ENCODE measurements at regions of chr11 and their contacts with region 1.

Region 1: DNA sequence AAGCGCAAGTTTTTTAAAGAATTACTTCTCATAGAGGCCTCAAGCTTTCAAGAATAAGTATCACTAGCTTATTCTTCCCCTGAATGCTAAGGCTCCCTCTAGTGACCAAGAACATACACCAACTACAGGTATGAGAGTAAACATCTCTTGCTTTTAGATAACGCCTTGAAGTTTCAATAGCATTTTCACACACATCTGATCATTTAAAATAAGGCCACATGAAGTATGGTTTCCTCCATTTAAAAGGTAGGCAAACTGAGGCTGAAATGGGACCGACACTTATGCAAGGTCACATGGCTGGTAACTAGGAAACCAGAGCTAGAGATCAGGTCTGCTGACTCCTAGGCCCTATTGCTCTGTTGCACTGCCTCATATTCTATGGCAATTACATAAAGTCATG is 66.5 kb downstream of the CCDC34 start:
- DNase-seq: no peak
- H3K4me3 ChIP-seq: no peak overlapping the region
- H3K27ac ChIP-seq: no peak overlapping the region
- H3K27me3 ChIP-seq: no peaks in the 10 kb centered on the region
- CTCF ChIP-seq: peak; percentile 87

Region 2: GRCh38 chr11:27183672-27184457 is 112.6 kb before region 1 on chr11:
- CTCF ChIA-PET with region 1: interaction called, 138 read pairs
- POLR2A ChIA-PET with region 1: no interaction called
- DNase-seq: peak; percentile 41
- H3K4me3 ChIP-seq: no peak overlapping the region
- H3K27ac ChIP-seq: no peak overlapping the region
- H3K27me3 ChIP-seq: peaks cover 20% of the 10 kb centered on the region
- CTCF ChIP-seq: peak; percentile 79

Region 3: DNA sequence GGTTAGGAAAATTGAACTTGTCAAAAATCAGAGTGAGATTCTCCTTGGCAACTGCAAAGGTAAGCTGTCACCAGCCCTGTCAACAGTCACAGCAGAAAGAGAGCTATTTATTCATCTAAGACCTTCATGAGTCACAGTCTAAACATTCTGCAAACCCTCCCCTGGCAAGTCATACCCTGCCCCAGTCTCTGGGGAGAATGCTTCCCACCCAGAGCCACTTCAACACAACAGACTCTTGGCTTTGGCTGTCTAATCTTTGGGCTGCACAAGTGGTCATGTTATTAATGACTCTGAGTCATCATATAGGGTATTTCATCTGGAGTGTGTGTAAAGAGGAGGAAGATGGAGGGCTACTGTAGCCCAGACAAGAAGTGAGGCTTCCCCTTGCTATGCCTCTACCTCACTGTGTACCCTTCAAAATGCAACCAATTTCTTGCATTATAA is 86.9 kb before region 1 on chr11:
- CTCF ChIA-PET with region 1: interaction called, 11 read pairs
- POLR2A ChIA-PET with region 1: no interaction called
- DNase-seq: no peak
- H3K4me3 ChIP-seq: no peak overlapping the region
- H3K27ac ChIP-seq: no peak overlapping the region
- H3K27me3 ChIP-seq: no peaks in the 10 kb centered on the region
- CTCF ChIP-seq: no peak

Region 4: DNA sequence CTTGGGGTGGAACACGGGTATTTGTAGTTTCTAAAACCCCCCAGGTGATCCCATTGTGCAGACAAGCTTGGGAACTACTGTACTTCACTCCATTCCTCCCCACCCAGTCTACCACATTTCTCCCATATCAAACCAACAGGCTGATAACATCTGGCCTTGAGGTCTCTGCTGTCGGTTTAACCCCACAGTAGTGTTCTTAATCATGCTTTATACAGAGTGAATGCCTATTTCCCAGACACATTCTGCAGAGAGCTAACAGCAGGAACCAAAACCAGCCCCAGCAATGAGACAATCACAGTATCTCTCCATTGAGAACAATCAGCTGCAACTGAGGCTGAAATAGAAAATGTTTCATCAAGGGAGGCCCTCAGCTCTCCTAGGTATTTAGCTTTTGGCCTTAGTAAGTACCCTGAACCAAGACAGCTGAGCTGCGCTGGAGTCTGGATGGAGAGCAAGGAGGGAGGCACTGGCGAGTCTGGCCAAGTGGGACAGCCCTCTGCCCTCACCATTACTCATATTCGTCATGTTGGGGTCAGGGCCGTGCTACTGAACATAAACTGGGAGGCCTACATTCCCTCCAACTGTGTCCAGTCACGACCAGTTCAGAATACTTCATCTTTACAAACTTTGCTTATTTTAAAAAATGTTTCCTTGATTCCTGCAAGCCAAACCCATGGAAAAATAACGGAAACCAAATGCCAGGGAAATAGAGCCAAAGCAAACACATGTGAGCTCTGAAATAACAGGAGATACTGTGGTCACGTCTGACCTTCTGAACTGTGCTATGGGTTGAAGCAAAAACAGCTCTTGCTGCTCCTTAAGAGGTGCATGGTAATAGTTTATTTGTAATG is 14.5 kb before region 1 on chr11:
- CTCF ChIA-PET with region 1: interaction called, 87 read pairs
- POLR2A ChIA-PET with region 1: interaction called, 4 read pairs
- DNase-seq: peak; percentile 72
- H3K4me3 ChIP-seq: no peak overlapping the region
- H3K27ac ChIP-seq: peak overlapping the region; percentile 47
- H3K27me3 ChIP-seq: peaks cover 28% of the 10 kb centered on the region
- CTCF ChIP-seq: no peak

Region 5: DNA sequence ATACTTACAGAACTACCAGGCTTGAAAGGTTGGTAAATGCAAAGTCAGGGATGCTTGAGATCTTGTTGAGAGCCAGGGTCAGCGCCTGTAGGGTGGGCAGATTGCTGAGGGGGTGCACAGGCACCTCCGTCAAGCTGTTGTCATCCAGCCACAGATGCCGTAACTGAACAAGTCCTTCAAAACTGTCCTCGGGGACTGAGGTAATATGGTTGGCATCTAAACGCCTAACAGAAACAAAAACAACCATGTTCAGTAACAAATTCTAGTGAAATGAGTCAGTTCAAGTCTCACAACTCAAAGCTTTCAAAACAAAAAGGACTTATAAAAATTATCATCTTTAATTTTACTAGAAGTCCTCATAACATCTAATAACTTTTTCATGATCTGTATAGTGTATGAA is 88.7 kb after region 1 on chr11:
- CTCF ChIA-PET with region 1: interaction called, 12 read pairs
- POLR2A ChIA-PET with region 1: no interaction called
- DNase-seq: peak; percentile 39
- H3K4me3 ChIP-seq: peak overlapping the region; percentile 11; the same call in 1 of the 2 replicates
- H3K27ac ChIP-seq: no peak overlapping the region
- H3K27me3 ChIP-seq: no peaks in the 10 kb centered on the region
- CTCF ChIP-seq: no peak

Region 6: GRCh38 chr11:27423125-27423524 is 126.6 kb after region 1 on chr11:
- CTCF ChIA-PET with region 1: no interaction called
- POLR2A ChIA-PET with region 1: no interaction called
- DNase-seq: peak; percentile 74
- H3K4me3 ChIP-seq: no peak overlapping the region
- H3K27ac ChIP-seq: no peak overlapping the region
- H3K27me3 ChIP-seq: no peaks in the 10 kb centered on the region
- CTCF ChIP-seq: no peak

Region 7: DNA sequence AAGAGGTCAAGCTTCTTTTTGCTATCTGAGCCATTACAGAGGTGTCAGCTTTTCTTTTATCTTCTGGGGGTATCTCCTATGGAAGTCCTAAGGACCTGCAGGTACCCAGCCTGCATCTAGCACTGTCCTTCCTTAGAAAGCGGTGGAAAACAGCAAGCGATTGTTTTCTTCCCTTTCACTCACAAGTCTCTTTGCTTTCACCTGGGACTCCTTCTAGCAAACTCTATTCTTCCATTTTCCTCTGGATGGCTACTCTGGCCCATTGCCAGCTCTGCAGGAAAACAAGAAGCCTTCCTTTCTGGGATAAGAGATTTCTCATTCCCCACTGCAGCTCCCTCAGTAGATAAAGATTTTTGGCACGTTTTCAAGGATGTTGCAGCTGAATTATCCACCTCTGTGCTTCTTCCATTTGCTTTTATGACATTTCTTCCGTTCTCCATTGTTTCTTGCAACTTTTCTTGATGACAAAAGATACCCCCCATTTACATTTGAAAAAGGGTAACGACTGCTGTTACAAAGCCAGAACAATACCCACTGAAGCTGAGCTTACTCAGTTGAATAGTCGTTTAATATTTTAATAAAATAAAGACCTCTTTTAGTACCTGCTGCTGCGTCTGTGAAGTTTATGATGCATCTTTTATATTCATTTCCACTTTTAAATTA is 444.0 kb after region 1 on chr11:
- CTCF ChIA-PET with region 1: no interaction called
- POLR2A ChIA-PET with region 1: no interaction called
- DNase-seq: no peak
- H3K4me3 ChIP-seq: no peak overlapping the region
- H3K27ac ChIP-seq: no peak overlapping the region
- H3K27me3 ChIP-seq: no peaks in the 10 kb centered on the region
- CTCF ChIP-seq: no peak

Region 8: DNA sequence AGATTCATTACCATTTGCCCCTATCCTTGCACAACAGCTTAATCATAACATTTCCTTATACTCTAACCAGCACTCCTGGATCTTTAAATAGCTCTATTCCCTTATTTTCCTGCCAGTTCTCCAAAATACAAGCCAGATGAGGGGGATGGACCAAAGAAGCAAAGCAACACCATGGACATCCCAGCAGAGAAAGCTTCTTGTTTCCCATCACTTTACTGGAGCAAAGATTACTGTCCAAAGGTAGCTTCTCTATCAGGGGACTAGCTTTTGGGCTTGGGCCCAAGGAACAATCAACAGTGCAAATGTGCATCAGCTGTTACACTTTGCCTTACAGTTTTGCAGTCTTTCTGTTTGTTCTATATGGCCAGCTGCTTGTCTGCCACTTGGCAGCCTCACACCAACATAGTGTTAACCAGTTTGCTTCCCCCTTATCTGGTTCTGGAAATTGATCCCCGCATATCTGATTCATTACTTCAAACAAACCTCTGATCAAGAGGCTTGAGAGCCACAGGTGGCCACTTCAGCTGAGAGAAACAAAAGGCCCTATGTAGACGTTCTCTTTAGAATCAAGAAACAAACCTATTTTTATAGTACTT is 1626.0 kb after region 1 on chr11:
- CTCF ChIA-PET with region 1: no interaction called
- POLR2A ChIA-PET with region 1: no interaction called
- DNase-seq: no peak
- H3K4me3 ChIP-seq: no peak overlapping the region
- H3K27ac ChIP-seq: no peak overlapping the region
- H3K27me3 ChIP-seq: no peaks in the 10 kb centered on the region
- CTCF ChIP-seq: no peak